ENCODE measurements at regions of chr1 and their contacts with region 1.

Region 1: GRCh38 chr1:12019858-12020509 is 686 bp downstream of the MIIP start:
- DNase-seq: peak; percentile 10
- ATAC-seq: peak; percentile 3; the same call in 1 of the 2 replicates
- H3K4me3 ChIP-seq: peak overlapping the region; percentile 63
- H3K27ac ChIP-seq: peak overlapping the region; percentile 31
- H3K4me1 ChIP-seq: no peaks in the 10 kb centered on the region
- H3K27me3 ChIP-seq: no peaks in the 10 kb centered on the region
- CTCF ChIP-seq: no peak
- POLR2A ChIP-seq: no peak
- RAD21 ChIP-seq: no peak

Region 2: GRCh38 chr1:12078938-12079861 is 59.2 kb after region 1 on chr1:
- CTCF ChIA-PET with region 1: interaction called, 4 read pairs
- POLR2A ChIA-PET with region 1: no interaction called
- dilution Hi-C with region 1: no loop called
- in situ Hi-C with region 1: no loop called
- intact Hi-C with region 1: loop called (anchors 1 kb)
- DNase-seq: peak; percentile 47
- ATAC-seq: peak; percentile 69
- H3K4me3 ChIP-seq: no peak overlapping the region
- H3K27ac ChIP-seq: no peak overlapping the region
- H3K4me1 ChIP-seq: peaks cover 10% of the 10 kb centered on the region
- H3K27me3 ChIP-seq: peaks cover 6% of the 10 kb centered on the region; the same call in 1 of the 2 replicates
- CTCF ChIP-seq: peak; percentile 63
- POLR2A ChIP-seq: no peak
- RAD21 ChIP-seq: peak; percentile 67

Region 3: GRCh38 chr1:12208764-12209494 is 188.9 kb after region 1 on chr1:
- CTCF ChIA-PET with region 1: interaction called, 3 read pairs
- POLR2A ChIA-PET with region 1: no interaction called
- dilution Hi-C with region 1: no loop called
- in situ Hi-C with region 1: no loop called
- intact Hi-C with region 1: loop called (anchors 5 kb)
- DNase-seq: peak; percentile 68
- ATAC-seq: peak; percentile 97
- H3K4me3 ChIP-seq: no peak overlapping the region
- H3K27ac ChIP-seq: no peak overlapping the region
- H3K4me1 ChIP-seq: no peaks in the 10 kb centered on the region; the same call in 1 of the 2 replicates
- H3K27me3 ChIP-seq: peaks cover 3% of the 10 kb centered on the region; the same call in 1 of the 2 replicates
- CTCF ChIP-seq: peak; percentile 92
- POLR2A ChIP-seq: peak; percentile 54; the same call in 1 of the 2 replicates
- RAD21 ChIP-seq: peak; percentile 98

Measured in IMR-90 (cell line).